ENCODE measurements at regions of chr21 and their contacts with region 1.

Region 1: DNA sequence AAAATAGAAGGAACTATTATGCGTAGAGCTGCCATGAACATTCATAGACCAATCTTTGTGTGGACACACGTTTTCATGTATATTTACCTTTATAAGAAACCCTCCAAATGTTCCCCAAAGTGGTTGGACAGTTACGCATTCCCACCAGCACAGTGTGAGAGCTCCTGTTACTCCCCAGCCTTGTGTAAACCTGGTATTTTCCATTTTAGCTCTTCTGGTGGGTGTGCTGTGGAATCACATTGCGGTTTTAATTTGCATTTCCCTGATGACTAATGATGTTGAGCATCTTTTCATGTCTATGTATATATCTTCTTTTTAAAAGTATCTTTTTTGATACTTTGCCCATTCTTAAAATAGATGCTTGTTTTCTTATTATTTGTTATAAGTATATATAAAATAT is 3.2 kb upstream of the UBASH3A start:
- DNase-seq: no peak
- H3K4me3 Mint-ChIP-seq: peak overlapping the region; percentile 58
- H3K27ac Mint-ChIP-seq: peak overlapping the region; percentile 88
- H3K4me1 Mint-ChIP-seq: peaks cover 65% of the 10 kb centered on the region
- H3K27me3 Mint-ChIP-seq: no peaks in the 10 kb centered on the region

Region 2: DNA sequence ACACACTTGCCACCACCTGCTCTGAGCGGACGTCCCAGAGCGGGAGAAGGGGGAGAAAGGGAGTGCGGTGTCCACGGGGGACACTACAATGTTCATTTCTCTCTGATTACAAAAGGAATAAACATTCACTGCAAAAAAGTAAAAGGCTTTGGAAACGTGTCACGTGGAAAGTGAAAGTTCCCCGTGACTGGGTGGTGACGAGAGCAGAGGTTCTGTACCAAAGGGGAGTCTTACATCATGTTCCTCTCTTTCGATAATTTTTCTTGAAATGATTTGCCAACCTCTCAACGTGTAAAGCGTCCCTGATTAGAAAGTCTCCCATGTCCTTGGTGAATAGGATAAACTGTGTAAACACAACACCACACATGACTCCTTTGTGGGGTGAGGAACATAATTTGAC is 499.4 kb before region 1 on chr21:
- intact Hi-C with region 1: no loop called
- DNase-seq: no peak
- H3K4me3 Mint-ChIP-seq: no peak overlapping the region
- H3K27ac Mint-ChIP-seq: peak overlapping the region; percentile 44
- H3K4me1 Mint-ChIP-seq: peaks cover 28% of the 10 kb centered on the region
- H3K27me3 Mint-ChIP-seq: no peaks in the 10 kb centered on the region

Region 3: DNA sequence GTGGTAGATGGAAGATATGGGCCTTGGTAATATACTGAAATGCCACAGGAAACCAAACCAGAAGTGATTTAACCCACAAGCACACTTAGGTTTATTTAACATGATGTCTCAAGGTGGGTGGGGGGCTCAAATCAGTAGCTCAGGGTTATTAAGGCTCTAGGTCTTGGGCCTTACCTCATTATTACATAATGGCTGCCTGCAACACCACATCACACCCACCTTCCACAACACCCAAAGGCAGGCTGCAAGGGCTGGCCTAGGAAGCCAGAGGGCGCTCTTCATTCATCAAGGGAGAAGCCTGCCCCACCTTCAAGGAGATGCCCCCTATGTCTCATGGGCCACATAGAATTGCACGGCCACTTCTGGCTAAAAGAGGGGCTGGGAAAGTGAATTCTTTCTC is 40.2 kb before region 1 on chr21:
- intact Hi-C with region 1: no loop called
- DNase-seq: no peak
- H3K4me3 Mint-ChIP-seq: no peak overlapping the region
- H3K27ac Mint-ChIP-seq: no peak overlapping the region
- H3K4me1 Mint-ChIP-seq: no peaks in the 10 kb centered on the region
- H3K27me3 Mint-ChIP-seq: peaks cover 24% of the 10 kb centered on the region

Region 4: GRCh38 chr21:42414928-42415769 is 14.6 kb after region 1 on chr21:
- intact Hi-C with region 1: loop called (anchors 2 kb)
- DNase-seq: peak; percentile 88
- H3K4me3 Mint-ChIP-seq: peak overlapping the region; percentile 73
- H3K27ac Mint-ChIP-seq: peak overlapping the region; percentile 98
- H3K4me1 Mint-ChIP-seq: peaks cover 66% of the 10 kb centered on the region
- H3K27me3 Mint-ChIP-seq: no peaks in the 10 kb centered on the region

Region 5: GRCh38 chr21:42467140-42467983 is 66.8 kb after region 1 on chr21:
- intact Hi-C with region 1: no loop called
- DNase-seq: no peak
- H3K4me3 Mint-ChIP-seq: no peak overlapping the region
- H3K27ac Mint-ChIP-seq: no peak overlapping the region
- H3K4me1 Mint-ChIP-seq: peaks cover 48% of the 10 kb centered on the region
- H3K27me3 Mint-ChIP-seq: peaks cover 8% of the 10 kb centered on the region

Region 6: GRCh38 chr21:42486531-42486930 is 86.0 kb after region 1 on chr21:
- intact Hi-C with region 1: no loop called
- DNase-seq: no peak
- H3K4me3 Mint-ChIP-seq: no peak overlapping the region
- H3K27ac Mint-ChIP-seq: no peak overlapping the region
- H3K4me1 Mint-ChIP-seq: no peaks in the 10 kb centered on the region
- H3K27me3 Mint-ChIP-seq: peaks cover 16% of the 10 kb centered on the region